Activated CD4-positive, alpha-beta T cell treated with anti-CD3 and anti-CD28 coated beads, Interleukin-2, amount 10 ng/mL, durations not matched to agents 24 days and 14 days (primary cell): ENCODE measurements at regions of chr19 and their contacts with region 1.

Region 1: GRCh38 chr19:3035542-3036118 is 6.5 kb upstream of the TLE2 start:
- DNase-seq: peak; percentile 99
- H3K4me3 Mint-ChIP-seq: peak overlapping the region; percentile 86
- H3K27ac Mint-ChIP-seq: peak overlapping the region; percentile 94
- H3K4me1 Mint-ChIP-seq: peaks cover 23% of the 10 kb centered on the region
- H3K27me3 Mint-ChIP-seq: peaks cover 31% of the 10 kb centered on the region

Region 2: GRCh38 chr19:2950286-2951124 is 85.1 kb before region 1 on chr19:
- intact Hi-C with region 1: loop called (anchors 2 kb)
- DNase-seq: peak; percentile 100
- H3K4me3 Mint-ChIP-seq: peak overlapping the region; percentile 96
- H3K27ac Mint-ChIP-seq: peak overlapping the region; percentile 95
- H3K4me1 Mint-ChIP-seq: peaks cover 12% of the 10 kb centered on the region
- H3K27me3 Mint-ChIP-seq: no peaks in the 10 kb centered on the region

Region 3: DNA sequence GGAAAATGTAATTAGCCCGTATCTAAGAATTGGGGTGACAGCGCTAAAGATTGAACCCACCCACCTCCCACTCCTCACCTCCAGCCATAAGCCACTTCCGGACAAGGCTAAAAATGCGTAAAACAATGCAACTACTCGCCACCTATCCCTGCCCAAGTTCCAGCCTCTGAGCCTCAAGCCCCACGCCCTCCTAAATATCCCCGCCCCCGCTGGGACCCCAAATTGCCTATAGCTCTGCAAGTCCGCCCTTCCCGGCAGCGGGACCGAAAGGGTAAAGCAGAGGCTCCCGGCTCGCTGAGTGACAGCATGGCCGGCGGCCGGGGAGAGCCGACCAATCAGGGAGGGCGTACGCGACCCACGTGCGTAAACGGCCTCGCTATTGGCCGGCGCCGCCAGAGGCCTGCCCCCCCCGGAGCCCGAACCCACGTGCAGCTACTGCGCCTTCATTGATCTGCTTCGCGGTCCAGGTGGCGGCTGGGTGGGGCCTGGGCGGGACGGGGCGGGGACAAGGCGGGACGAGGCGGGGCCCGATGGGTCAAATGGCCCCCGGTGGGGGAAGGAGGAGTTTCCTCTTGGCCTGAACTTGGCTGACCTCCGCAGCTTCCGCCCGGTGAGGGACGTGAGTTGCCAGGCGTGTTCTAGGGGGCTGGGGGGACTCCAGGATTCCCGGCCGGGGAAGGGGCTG is 58.5 kb before region 1 on chr19 and contains the start of gene TLE6:
- intact Hi-C with region 1: loop called (anchors 1 kb)
- DNase-seq: peak; percentile 97
- H3K4me3 Mint-ChIP-seq: peak within 1 kb of the TSS; percentile 88
- H3K27ac Mint-ChIP-seq: peak within 1 kb of the TSS; percentile 87
- H3K4me1 Mint-ChIP-seq: peaks cover 14% of the 10 kb centered on the region
- H3K27me3 Mint-ChIP-seq: peaks cover 13% of the 10 kb centered on the region
- total RNA-seq, gene TLE6: 1.1 and 1.3 TPM in 2 replicates

Region 4: GRCh38 chr19:3049089-3049488 is 13.5 kb after region 1 on chr19:
- intact Hi-C with region 1: no loop called
- DNase-seq: no peak
- H3K4me3 Mint-ChIP-seq: no peak overlapping the region
- H3K27ac Mint-ChIP-seq: no peak overlapping the region
- H3K4me1 Mint-ChIP-seq: peaks cover 7% of the 10 kb centered on the region
- H3K27me3 Mint-ChIP-seq: peaks cover 8% of the 10 kb centered on the region

Region 5: GRCh38 chr19:3062168-3063102 is 26.8 kb after region 1 on chr19 and contains the start of gene TLE5:
- intact Hi-C with region 1: loop called (anchors 1 kb)
- DNase-seq: peak; percentile 92
- H3K4me3 Mint-ChIP-seq: peak within 1 kb of the TSS; percentile 89
- H3K27ac Mint-ChIP-seq: peak within 1 kb of the TSS; percentile 98
- H3K4me1 Mint-ChIP-seq: peaks cover 24% of the 10 kb centered on the region
- H3K27me3 Mint-ChIP-seq: no peaks in the 10 kb centered on the region
- total RNA-seq, gene TLE5: 380 and 392 TPM in 2 replicates

Region 6: DNA sequence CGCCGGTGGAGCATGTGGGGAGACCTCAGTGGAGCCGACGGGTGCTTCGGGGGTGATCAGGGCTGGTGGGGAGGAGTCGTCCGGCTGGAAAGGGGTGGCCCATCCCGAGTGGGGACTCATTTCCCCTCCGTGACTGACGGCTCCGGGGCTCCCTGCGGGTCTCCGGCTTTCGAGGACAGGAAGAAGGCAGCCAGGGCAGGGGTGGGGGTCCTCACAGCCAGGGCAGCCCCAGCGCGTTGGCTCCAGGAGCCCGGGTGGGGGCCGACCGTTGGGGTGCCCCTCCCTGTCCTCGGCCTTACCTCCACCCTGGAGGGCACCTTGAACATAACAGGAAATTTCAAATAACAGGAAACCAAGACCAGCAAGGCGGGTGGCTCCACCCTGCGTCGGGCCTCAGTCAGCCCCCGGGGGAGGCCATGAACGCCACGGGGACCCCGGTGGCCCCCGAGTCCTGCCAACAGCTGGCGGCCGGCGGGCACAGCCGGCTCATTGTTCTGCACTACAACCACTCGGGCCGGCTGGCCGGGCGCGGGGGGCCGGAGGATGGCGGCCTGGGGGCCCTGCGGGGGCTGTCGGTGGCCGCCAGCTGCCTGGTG is 142.8 kb after region 1 on chr19 and contains the start of gene S1PR4:
- intact Hi-C with region 1: loop called (anchors 2 kb)
- DNase-seq: peak; percentile 91
- H3K4me3 Mint-ChIP-seq: peak within 1 kb of the TSS; percentile 100
- H3K27ac Mint-ChIP-seq: peak within 1 kb of the TSS; percentile 97
- H3K4me1 Mint-ChIP-seq: peaks cover 26% of the 10 kb centered on the region
- H3K27me3 Mint-ChIP-seq: no peaks in the 10 kb centered on the region
- total RNA-seq, gene S1PR4: 41.8 and 43.7 TPM in 2 replicates

Region 7: DNA sequence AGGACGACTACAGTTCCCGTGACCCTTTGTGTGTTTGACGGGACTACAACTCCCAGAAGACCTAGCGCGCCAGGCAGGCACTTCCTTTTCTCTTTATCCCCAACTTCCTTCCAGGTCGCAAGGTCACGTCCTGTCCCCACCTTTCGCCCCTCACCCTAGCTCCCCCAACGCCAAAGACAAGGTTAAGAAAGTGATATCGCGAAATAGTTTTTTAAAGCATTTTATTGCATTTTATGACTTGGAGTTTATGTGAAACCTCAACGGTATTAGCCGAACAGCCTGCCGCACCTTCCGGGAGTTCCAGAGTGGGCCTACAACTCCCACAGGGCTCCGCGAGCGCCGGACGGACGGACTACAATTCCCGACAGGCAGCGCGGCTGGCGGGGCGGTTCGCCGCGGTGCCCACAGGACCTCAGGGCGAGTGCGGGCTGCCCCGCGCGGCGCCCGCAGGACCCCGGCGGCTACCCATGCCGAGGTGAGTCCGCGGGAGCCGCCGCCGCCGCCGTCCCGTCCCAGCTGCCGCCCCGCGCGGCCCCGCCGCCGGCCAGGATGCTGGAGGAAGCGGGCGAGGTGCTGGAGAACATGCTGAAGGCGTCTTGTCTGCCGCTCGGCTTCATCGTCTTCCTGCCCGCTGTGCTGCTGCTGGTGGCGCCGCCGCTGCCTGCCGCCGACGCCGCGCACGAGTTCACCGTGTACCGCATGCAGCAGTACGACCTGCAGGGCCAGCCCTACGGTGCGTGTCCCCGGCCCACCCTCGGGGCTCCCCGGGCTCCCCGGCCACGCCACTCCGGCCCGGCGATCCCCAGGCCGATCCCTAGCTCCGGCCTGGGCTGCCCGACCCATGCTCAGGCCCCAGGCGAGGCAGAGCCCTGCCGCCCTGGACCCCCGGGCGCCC is 150.1 kb after region 1 on chr19 and contains the start of gene NCLN:
- intact Hi-C with region 1: loop called (anchors 1 kb)
- DNase-seq: peak; percentile 98
- H3K4me3 Mint-ChIP-seq: peak within 1 kb of the TSS; percentile 96
- H3K27ac Mint-ChIP-seq: peak within 1 kb of the TSS; percentile 91
- H3K4me1 Mint-ChIP-seq: peaks cover 42% of the 10 kb centered on the region
- H3K27me3 Mint-ChIP-seq: no peaks in the 10 kb centered on the region
- total RNA-seq, gene NCLN: 114 and 116 TPM in 2 replicates